ENCODE measurements at regions of chr2 and their contacts with region 1.

Region 1: GRCh38 chr2:236240228-236241038 is 23.8 kb downstream of the ASB18 start:
- DNase-seq: no peak
- ATAC-seq: peak; percentile 80

Region 2: DNA sequence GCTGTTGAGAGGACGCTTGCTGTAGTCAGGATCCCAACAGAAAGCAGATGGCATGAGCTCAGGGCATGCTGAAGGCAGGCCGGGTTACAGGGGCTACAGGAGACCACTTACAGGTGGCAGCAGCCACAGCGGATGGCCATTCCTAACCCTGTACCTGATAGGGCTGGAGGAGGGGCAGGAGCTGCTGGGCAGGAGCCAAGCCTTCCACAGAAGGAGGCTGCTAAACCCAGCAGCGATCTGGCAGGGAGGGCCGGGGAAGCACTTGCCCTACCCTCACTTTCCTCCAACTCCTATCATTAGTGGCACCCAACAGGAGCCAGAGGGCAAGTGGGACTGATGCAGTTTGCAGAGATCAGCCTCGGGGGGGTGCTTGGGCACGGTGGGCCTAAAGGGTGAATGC is 21.8 kb after region 1 on chr2:
- intact Hi-C with region 1: loop called (anchors 2 kb)
- DNase-seq: peak; percentile 66
- ATAC-seq: peak; percentile 75

Region 3: DNA sequence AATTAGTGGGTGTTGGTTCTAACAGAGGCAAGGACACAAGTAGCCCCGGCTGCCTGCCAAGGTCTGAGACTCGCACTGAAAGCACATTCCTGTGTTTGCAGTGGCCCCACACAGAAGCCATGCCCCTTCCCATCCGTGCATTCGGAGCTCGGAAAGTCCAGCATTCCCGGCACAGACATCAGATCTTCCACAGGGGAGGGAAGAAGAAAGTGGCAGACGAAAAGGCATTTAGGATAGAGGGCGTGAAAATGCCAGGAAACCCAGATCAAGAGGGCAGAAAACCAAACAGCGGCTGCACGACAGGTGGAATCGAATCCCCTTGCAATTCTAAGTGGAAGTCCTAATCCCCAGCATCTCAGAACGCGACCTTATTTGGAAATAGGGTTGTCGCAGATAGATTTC is 129.2 kb after region 1 on chr2:
- intact Hi-C with region 1: no loop called
- DNase-seq: no peak
- ATAC-seq: no peak

Region 4: GRCh38 chr2:237501892-237502513 is 1261.6 kb after region 1 on chr2:
- intact Hi-C with region 1: no loop called
- DNase-seq: no peak
- ATAC-seq: no peak